ENCODE measurements at regions of chr1 and their contacts with region 1.

Region 1: GRCh38 chr1:205711104-205712020 is 31.1 kb upstream of the SLC45A3 start:
- DNase-seq: peak; percentile 20
- H3K4me3 ChIP-seq: no peak overlapping the region
- H3K27me3 ChIP-seq: no peaks in the 10 kb centered on the region
- CTCF ChIP-seq: peak; percentile 87

Region 2: GRCh38 chr1:205485338-205486228 is 225.8 kb before region 1 on chr1:
- CTCF ChIA-PET with region 1: no interaction called
- POLR2A ChIA-PET with region 1: no interaction called
- DNase-seq: no peak
- H3K4me3 ChIP-seq: no peak overlapping the region
- H3K27me3 ChIP-seq: peaks cover 31% of the 10 kb centered on the region
- CTCF ChIP-seq: peak; percentile 98

Region 3: GRCh38 chr1:205584732-205585131 is 126.6 kb before region 1 on chr1:
- CTCF ChIA-PET with region 1: interaction called, 42 read pairs
- POLR2A ChIA-PET with region 1: interaction called, 16 read pairs
- DNase-seq: no peak
- H3K4me3 ChIP-seq: no peak overlapping the region
- H3K27me3 ChIP-seq: peaks cover 20% of the 10 kb centered on the region
- CTCF ChIP-seq: peak; percentile 29; the same call in 1 of the 2 replicates

Region 4: DNA sequence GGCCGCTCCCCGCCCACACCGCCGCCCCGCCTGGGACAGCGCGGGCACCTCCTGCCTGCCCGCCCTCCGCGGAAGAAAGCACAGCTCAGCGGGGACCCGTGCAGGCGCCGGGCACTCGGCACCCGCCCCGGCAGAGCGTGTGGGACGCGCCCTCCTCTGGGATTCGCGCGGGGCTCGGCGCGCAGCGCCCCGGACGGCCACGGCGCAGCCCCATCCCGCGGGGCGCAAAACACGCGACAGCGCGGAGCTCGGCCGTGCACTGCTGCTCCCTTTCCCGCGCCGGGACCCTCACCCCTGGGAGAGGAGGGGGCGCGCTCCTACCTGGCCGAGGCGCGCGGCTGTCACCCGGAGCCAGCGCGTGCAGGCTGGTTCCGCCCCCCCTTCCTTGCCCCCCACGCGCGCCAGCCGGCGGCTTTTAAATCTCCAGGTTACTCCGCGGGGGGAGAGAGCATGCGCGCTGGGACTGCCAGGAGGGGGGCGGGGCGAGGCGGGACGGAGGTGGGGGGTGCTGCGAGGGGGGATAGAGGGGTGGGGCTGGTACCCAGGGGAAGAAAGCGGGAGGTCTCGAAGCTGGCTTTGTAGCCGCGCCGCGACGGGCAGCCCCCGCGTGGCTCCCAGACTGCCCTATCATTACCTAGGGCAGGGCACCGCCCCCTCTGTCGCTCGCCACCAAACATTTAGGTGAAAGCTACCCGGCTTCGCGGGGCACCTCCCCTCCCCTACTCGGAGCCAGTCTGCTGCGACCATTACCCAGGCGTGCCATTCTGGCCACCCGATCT is 31.1 kb before region 1 on chr1 and contains the start of gene SLC45A3:
- CTCF ChIA-PET with region 1: interaction called, 20 read pairs
- POLR2A ChIA-PET with region 1: no interaction called
- DNase-seq: no peak
- H3K4me3 ChIP-seq: peak within 1 kb of the TSS; percentile 58
- H3K27me3 ChIP-seq: peaks cover 2% of the 10 kb centered on the region; the same call in 1 of the 2 replicates
- CTCF ChIP-seq: no peak
- polyA plus RNA-seq, gene SLC45A3: 0.70 and 0.91 TPM in 2 replicates

Region 5: DNA sequence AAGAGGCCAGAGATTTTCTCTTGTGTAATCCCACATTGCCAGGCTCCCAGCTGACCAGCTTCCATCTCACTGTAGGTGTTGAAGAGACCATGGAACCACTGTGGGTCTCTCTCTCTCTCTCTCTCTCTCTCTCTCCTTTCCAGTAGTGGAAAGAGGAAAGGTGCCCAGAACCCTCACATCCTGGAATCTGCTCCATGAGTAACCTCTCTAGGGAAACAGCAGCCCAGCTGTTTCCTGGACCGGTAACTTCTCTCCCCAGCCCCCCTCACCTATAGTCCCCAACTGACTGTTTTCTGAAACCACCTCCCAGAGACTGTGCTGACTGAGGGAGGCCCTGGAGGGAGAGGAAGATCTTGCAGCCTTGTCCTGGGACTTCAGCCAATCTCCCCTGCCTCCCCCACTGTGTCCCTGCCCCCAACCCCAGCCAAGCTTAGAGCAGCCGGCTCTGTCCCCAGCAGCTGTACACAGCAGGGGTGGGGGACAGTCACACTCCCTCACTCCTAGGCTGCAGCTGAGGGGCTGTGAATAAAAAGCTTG is 10.4 kb before region 1 on chr1:
- CTCF ChIA-PET with region 1: interaction called, 10 read pairs
- POLR2A ChIA-PET with region 1: no interaction called
- DNase-seq: no peak
- H3K4me3 ChIP-seq: no peak overlapping the region
- H3K27me3 ChIP-seq: no peaks in the 10 kb centered on the region
- CTCF ChIP-seq: no peak

Region 6: DNA sequence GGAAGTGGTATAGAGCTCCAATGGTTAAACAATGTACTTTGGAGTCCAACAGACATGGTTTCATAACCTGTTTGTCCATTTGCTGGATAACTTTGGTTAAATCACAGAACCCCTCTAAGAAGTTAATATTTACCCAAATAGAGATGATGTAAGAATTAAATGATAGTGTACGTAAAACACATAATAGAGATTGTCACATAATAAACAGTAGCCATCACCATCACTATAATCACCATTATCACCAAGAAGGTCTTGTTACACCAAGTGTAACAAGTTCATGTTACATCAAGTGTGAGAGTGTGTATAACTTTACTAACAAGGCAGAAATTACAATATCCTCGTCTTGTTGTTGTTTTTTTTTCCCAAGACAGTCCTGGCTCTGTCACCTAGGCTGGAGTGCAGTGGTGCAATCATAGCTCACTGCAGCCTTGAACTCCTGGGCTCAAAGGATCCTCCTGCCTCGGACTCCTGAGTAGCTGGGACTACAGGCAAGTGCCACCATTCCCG is 15.3 kb after region 1 on chr1:
- CTCF ChIA-PET with region 1: interaction called, 29 read pairs
- POLR2A ChIA-PET with region 1: no interaction called
- DNase-seq: no peak
- H3K4me3 ChIP-seq: no peak overlapping the region
- H3K27me3 ChIP-seq: no peaks in the 10 kb centered on the region
- CTCF ChIP-seq: no peak

Measured in BJ (cell line).